ENCODE measurements at regions of chr22 and their contacts with region 1.

Region 1: GRCh38 chr22:38740754-38741153 is 15.0 kb downstream of the SUN2 start:
- DNase-seq: no peak
- H3K4me3 ChIP-seq: no peak overlapping the region
- H3K27ac ChIP-seq: no peak overlapping the region
- H3K4me1 ChIP-seq: no peaks in the 10 kb centered on the region
- H3K27me3 ChIP-seq: no peaks in the 10 kb centered on the region
- CTCF ChIP-seq: no peak

Region 2: GRCh38 chr22:38056969-38057891 is 683.5 kb before region 1 on chr22 and contains the start of gene PICK1:
- CTCF ChIA-PET with region 1: interaction called, 12 read pairs
- POLR2A ChIA-PET with region 1: no interaction called
- intact Hi-C with region 1: no loop called
- DNase-seq: peak; percentile 87 to 88
- H3K4me3 ChIP-seq: peak within 1 kb of the TSS; percentile 77
- H3K27ac ChIP-seq: peak within 1 kb of the TSS; percentile 86
- H3K4me1 ChIP-seq: peaks cover 7% of the 10 kb centered on the region
- H3K27me3 ChIP-seq: no peaks in the 10 kb centered on the region
- CTCF ChIP-seq: no peak
- total RNA-seq, gene PICK1: 52.0 and 55.9 TPM in 2 replicates

Region 3: GRCh38 chr22:38167988-38168431 is 572.7 kb before region 1 on chr22:
- CTCF ChIA-PET with region 1: no interaction called
- POLR2A ChIA-PET with region 1: no interaction called
- intact Hi-C with region 1: no loop called
- DNase-seq: no peak
- H3K4me3 ChIP-seq: no peak overlapping the region
- H3K27ac ChIP-seq: no peak overlapping the region
- H3K4me1 ChIP-seq: peaks cover 26% of the 10 kb centered on the region
- H3K27me3 ChIP-seq: no peaks in the 10 kb centered on the region
- CTCF ChIP-seq: no peak

Region 4: GRCh38 chr22:38724926-38725571 is 15.7 kb before region 1 on chr22:
- CTCF ChIA-PET with region 1: interaction called, 8 read pairs
- POLR2A ChIA-PET with region 1: interaction called, 12 read pairs
- intact Hi-C with region 1: no loop called
- DNase-seq: no peak
- H3K4me3 ChIP-seq: no peak overlapping the region
- H3K27ac ChIP-seq: no peak overlapping the region
- H3K4me1 ChIP-seq: no peaks in the 10 kb centered on the region
- H3K27me3 ChIP-seq: no peaks in the 10 kb centered on the region
- CTCF ChIP-seq: peak; percentile 79

Region 5: DNA sequence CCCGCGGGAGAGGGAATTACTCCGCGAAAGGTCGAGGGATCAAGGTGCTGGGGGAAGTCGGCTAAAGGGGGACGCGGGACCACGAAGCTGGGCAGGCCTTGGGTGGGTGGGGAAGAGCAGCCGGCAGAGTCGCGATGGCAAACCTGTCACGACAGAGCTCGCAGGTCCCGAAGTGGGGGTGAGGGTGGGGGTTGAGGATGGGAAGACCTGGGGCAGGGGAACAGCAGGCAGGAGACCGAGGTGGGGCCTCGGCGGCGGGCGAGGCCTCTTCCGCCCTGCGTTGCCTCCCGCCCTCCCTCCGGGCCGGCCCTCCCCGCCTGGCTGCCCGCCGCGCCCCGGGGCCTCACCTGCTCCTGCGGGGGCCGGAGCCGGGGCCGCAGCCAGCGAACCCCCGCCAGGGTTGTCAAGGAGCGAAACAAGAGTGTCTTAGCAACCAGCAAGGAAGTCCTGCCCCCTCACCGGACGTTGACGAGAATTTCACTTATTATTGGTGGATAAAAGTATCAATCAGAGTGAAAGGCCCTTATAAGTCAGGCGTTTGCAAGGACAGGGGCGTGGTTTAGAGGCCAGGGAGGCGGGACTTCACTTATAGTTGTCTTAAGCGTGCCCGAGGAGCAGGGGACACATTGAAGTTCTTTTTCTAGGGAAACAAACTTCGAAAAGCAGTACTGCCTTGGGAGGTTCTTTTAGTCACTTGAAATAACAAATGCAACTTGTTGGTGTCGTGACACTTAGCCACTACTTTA is 53.1 kb after region 1 on chr22 and contains the start of gene DNAL4:
- CTCF ChIA-PET with region 1: no interaction called
- POLR2A ChIA-PET with region 1: no interaction called
- intact Hi-C with region 1: no loop called
- DNase-seq: peak; percentile 95 to 99
- H3K4me3 ChIP-seq: peak within 1 kb of the TSS; percentile 85
- H3K27ac ChIP-seq: peak within 1 kb of the TSS; percentile 3; the same call in 1 of the 2 replicates
- H3K4me1 ChIP-seq: peaks cover 21% of the 10 kb centered on the region
- H3K27me3 ChIP-seq: no peaks in the 10 kb centered on the region
- CTCF ChIP-seq: no peak
- total RNA-seq, gene DNAL4: 50.3 and 53.0 TPM in 2 replicates

Region 6: GRCh38 chr22:39030705-39031104 is 290.0 kb after region 1 on chr22:
- CTCF ChIA-PET with region 1: no interaction called
- POLR2A ChIA-PET with region 1: no interaction called
- intact Hi-C with region 1: no loop called
- DNase-seq: no peak
- H3K4me3 ChIP-seq: no peak overlapping the region
- H3K27ac ChIP-seq: no peak overlapping the region
- H3K4me1 ChIP-seq: peaks cover 7% of the 10 kb centered on the region; the same call in 1 of the 2 replicates
- H3K27me3 ChIP-seq: no peaks in the 10 kb centered on the region
- CTCF ChIP-seq: no peak

Region 7: DNA sequence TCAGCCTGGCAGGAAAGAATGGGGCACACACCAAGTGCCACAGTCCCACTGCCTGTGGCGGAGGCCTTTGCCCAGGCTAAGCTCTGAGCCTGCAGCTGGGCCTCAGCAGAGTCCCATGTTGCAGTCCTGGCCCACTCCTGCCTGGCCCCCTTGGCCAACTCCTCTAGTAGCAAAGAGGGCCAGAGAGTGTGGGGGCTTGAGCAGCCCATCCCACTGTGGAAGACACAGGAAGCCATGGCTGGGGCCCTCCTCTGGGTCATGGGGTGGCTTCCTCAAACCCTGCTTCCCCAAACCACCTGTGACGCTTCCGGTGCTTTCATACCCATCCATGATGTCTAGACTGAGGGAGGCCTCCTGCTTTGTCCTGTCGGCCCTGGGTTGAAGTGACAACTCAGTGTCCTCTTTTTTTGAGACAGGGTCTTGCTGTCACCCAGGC is 786.0 kb after region 1 on chr22:
- CTCF ChIA-PET with region 1: interaction called, 10 read pairs
- POLR2A ChIA-PET with region 1: no interaction called
- intact Hi-C with region 1: no loop called
- DNase-seq: peak in 1 of 2 experiments; percentile 35
- H3K4me3 ChIP-seq: no peak overlapping the region
- H3K27ac ChIP-seq: 0 out of 2 replicates have a peak overlapping the region, but pooled peaks have one; percentile 19
- H3K4me1 ChIP-seq: peaks cover 52% of the 10 kb centered on the region
- H3K27me3 ChIP-seq: no peaks in the 10 kb centered on the region
- CTCF ChIP-seq: no peak